ENCODE measurements at regions of chr7 and their contacts with region 1.

Region 1: GRCh38 chr7:126185959-126186580 is 1066.7 kb downstream of the GRM8 start:
- DNase-seq: no peak
- ATAC-seq: no peak
- H3K4me3 ChIP-seq: no peak overlapping the region
- H3K4me3 Mint-ChIP-seq: no peak overlapping the region
- H3K27ac ChIP-seq: no peak overlapping the region
- H3K27ac Mint-ChIP-seq: no peak overlapping the region
- H3K4me1 ChIP-seq: no peaks in the 10 kb centered on the region
- H3K4me1 Mint-ChIP-seq: no peaks in the 10 kb centered on the region
- H3K27me3 ChIP-seq: no peaks in the 10 kb centered on the region
- H3K27me3 Mint-ChIP-seq: no peaks in the 10 kb centered on the region

Region 2: GRCh38 chr7:125090596-125090995 is 1095.5 kb before region 1 on chr7:
- CTCF ChIA-PET with region 1: no interaction called
- POLR2A ChIA-PET with region 1: no interaction called
- intact Hi-C with region 1: no loop called
- DNase-seq: no peak
- ATAC-seq: no peak
- H3K4me3 ChIP-seq: no peak overlapping the region
- H3K4me3 Mint-ChIP-seq: no peak overlapping the region
- H3K27ac ChIP-seq: no peak overlapping the region
- H3K27ac Mint-ChIP-seq: no peak overlapping the region
- H3K4me1 ChIP-seq: no peaks in the 10 kb centered on the region
- H3K4me1 Mint-ChIP-seq: no peaks in the 10 kb centered on the region
- H3K27me3 ChIP-seq: no peaks in the 10 kb centered on the region
- H3K27me3 Mint-ChIP-seq: no peaks in the 10 kb centered on the region

Region 3: GRCh38 chr7:126119981-126120380 is 66.1 kb before region 1 on chr7:
- CTCF ChIA-PET with region 1: no interaction called
- POLR2A ChIA-PET with region 1: no interaction called
- intact Hi-C with region 1: no loop called
- DNase-seq: no peak
- ATAC-seq: no peak
- H3K4me3 ChIP-seq: no peak overlapping the region
- H3K4me3 Mint-ChIP-seq: no peak overlapping the region
- H3K27ac ChIP-seq: no peak overlapping the region
- H3K27ac Mint-ChIP-seq: no peak overlapping the region
- H3K4me1 ChIP-seq: no peaks in the 10 kb centered on the region
- H3K4me1 Mint-ChIP-seq: no peaks in the 10 kb centered on the region
- H3K27me3 ChIP-seq: no peaks in the 10 kb centered on the region
- H3K27me3 Mint-ChIP-seq: no peaks in the 10 kb centered on the region

Region 4: GRCh38 chr7:126236261-126236660 is 50.2 kb after region 1 on chr7:
- CTCF ChIA-PET with region 1: no interaction called
- POLR2A ChIA-PET with region 1: no interaction called
- intact Hi-C with region 1: loop called in 1 of 2 experiments (anchors 10 kb)
- DNase-seq: no peak
- ATAC-seq: no peak
- H3K4me3 ChIP-seq: no peak overlapping the region
- H3K4me3 Mint-ChIP-seq: no peak overlapping the region
- H3K27ac ChIP-seq: no peak overlapping the region
- H3K27ac Mint-ChIP-seq: no peak overlapping the region
- H3K4me1 ChIP-seq: no peaks in the 10 kb centered on the region
- H3K4me1 Mint-ChIP-seq: no peaks in the 10 kb centered on the region
- H3K27me3 ChIP-seq: no peaks in the 10 kb centered on the region
- H3K27me3 Mint-ChIP-seq: no peaks in the 10 kb centered on the region